OCI-LY7 (cell line): ENCODE measurements at regions of chr15 and their contacts with region 1.

Region 1: DNA sequence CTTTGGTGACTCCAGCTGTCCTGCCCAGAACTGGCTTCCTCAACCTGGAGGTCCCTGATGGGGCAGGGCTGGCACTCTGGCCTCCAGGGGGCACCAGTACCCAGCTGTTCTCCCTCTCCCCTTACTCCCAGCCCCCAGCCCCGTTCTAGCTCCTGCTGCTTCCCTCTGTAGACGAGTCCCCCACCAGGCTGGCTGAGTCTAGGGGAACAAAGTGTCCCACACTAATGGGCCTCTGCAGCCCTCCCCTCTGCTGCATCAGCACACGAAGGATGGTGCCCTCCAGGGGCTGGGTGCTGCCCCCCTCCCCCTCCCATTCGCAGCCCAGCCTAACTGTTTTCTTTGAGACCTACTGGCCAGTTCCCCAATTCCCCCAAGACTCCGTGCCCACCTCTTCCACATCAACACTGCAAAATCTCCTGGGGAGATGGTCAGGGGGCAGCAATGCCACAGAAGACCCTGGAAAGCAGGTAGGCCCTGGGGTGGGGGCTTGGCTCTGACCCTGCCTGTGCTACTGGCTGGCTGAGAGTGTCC is 4.2 kb downstream of the RHCG start:
- DNase-seq: peak; percentile 29
- H3K4me3 ChIP-seq: no peak overlapping the region
- H3K27ac ChIP-seq: no peak overlapping the region
- H3K4me1 ChIP-seq: no peaks in the 10 kb centered on the region
- CTCF ChIP-seq: peak; percentile 76

Region 2: GRCh38 chr15:89514596-89515406 is 22.6 kb after region 1 on chr15:
- CTCF ChIA-PET with region 1: no interaction called
- POLR2A ChIA-PET with region 1: no interaction called
- intact Hi-C with region 1: no loop called
- DNase-seq: no peak
- H3K4me3 ChIP-seq: no peak overlapping the region
- H3K27ac ChIP-seq: no peak overlapping the region
- H3K4me1 ChIP-seq: no peaks in the 10 kb centered on the region
- CTCF ChIP-seq: no peak

Region 3: GRCh38 chr15:89556413-89557262 is 64.5 kb after region 1 on chr15:
- CTCF ChIA-PET with region 1: no interaction called
- POLR2A ChIA-PET with region 1: no interaction called
- intact Hi-C with region 1: loop called (anchors 1 kb)
- DNase-seq: peak; percentile 71
- H3K4me3 ChIP-seq: no peak overlapping the region
- H3K27ac ChIP-seq: no peak overlapping the region
- H3K4me1 ChIP-seq: no peaks in the 10 kb centered on the region
- CTCF ChIP-seq: peak; percentile 89

Region 4: DNA sequence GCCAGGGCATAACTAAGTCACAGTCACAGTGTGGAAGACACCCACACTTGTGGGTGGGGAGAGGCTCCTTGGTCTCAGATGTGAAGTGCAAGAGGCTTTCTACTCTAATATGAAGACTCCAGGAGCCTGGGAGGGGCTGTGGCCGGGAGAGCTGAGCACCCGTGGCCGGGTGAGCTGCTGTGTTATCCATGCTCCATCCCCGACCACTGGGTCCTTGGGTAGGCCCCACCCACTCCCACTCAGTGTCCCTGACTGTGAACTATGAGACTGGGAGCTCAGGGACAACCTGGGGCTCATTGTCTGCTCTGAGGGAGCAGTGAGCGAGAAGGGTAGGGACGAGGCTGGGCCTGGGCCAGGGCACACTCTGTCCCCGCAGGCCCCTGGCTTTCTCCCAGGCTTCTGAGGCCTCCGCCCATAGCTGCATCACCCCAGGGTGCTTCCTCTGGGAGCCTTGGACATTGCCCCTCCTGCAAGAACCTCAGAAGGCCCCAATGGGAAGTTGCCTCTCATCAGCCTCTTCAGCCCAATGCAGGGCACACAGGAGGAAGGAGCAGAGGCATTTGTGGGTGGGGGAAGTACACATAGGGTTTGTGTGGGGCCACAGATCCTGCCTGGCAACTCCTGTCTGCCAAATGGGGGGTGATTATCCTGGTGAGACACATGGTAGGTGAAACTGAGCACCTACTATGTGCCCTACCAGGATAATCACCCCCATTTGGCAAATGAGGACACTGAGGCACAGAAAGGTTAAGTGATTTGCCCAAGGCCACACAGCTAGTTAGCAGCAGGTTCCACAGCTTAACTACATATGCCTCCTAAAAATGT is 320.0 kb after region 1 on chr15:
- CTCF ChIA-PET with region 1: no interaction called
- POLR2A ChIA-PET with region 1: no interaction called
- intact Hi-C with region 1: no loop called
- DNase-seq: no peak
- H3K4me3 ChIP-seq: no peak overlapping the region
- H3K27ac ChIP-seq: no peak overlapping the region
- H3K4me1 ChIP-seq: no peaks in the 10 kb centered on the region
- CTCF ChIP-seq: no peak